IMR-90 (cell line): ENCODE measurements at regions of chr15 and their contacts with region 1.

Region 1: GRCh38 chr15:48440084-48440483 is 108.9 kb downstream of the DUT start:
- DNase-seq: peak; percentile 87
- ATAC-seq: peak; percentile 92
- H3K4me3 ChIP-seq: no peak overlapping the region
- H3K27ac ChIP-seq: peak overlapping the region; percentile 72; the same call in 1 of the 2 replicates
- H3K4me1 ChIP-seq: peaks cover 5% of the 10 kb centered on the region
- H3K27me3 ChIP-seq: no peaks in the 10 kb centered on the region
- CTCF ChIP-seq: no peak
- POLR2A ChIP-seq: no peak
- RAD21 ChIP-seq: no peak

Region 2: DNA sequence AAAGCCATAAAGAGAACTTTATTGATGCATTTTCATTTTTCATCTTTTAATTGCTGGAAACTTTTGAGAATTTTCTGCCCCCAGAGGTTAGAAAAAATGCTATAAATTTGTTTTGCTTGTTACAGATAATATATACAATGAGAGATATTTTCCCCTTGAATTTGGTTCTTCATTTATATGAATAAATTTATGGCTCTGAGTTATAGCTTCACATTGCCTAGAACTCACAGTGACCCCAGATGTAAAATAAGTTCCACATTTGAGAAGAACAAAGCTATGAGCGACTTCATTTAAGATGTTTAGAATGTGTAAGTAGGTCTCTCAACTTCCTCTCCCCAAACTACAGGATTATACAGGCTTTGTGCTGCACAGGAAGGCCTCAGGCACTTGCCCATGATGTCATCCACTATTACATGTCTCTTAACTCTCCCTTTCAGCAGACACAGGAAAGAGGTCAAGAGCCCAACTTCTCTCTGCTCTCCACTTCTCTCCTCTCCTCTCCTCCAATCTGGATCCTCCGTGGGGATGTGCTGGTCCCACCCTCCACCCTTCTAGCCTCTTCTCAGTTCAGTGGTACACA is 16.1 kb before region 1 on chr15:
- CTCF ChIA-PET with region 1: interaction called, 11 read pairs
- POLR2A ChIA-PET with region 1: no interaction called
- dilution Hi-C with region 1: no loop called
- in situ Hi-C with region 1: no loop called
- intact Hi-C with region 1: no loop called
- DNase-seq: peak; percentile 72
- ATAC-seq: peak; percentile 53
- H3K4me3 ChIP-seq: no peak overlapping the region
- H3K27ac ChIP-seq: peak overlapping the region; percentile 1; the same call in 1 of the 2 replicates
- H3K4me1 ChIP-seq: peaks cover 15% of the 10 kb centered on the region
- H3K27me3 ChIP-seq: no peaks in the 10 kb centered on the region
- CTCF ChIP-seq: no peak
- POLR2A ChIP-seq: no peak
- RAD21 ChIP-seq: no peak

Region 3: DNA sequence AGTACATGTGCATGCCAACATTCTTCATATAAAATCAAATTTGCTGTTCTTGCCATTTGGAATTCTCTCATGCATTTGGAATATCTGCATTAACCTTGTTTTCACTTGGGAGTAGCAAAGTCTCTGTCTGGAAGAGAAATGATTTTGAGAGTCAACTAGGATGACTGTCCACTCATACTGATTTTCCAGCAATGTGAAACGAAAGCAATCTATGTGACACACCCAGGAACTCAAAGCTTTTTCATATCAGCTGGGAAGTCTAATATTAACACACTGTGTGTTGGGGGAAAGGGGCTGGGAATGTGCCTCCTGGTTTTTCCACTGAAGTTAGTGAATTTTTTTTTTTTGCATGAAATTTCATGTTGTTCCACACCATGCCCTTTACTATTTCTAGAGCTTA is 16.1 kb after region 1 on chr15:
- CTCF ChIA-PET with region 1: interaction called, 11 read pairs
- POLR2A ChIA-PET with region 1: interaction called, 4 read pairs
- dilution Hi-C with region 1: no loop called
- in situ Hi-C with region 1: no loop called
- intact Hi-C with region 1: no loop called
- DNase-seq: no peak
- ATAC-seq: no peak
- H3K4me3 ChIP-seq: no peak overlapping the region
- H3K27ac ChIP-seq: no peak overlapping the region
- H3K4me1 ChIP-seq: peaks cover 9% of the 10 kb centered on the region
- H3K27me3 ChIP-seq: no peaks in the 10 kb centered on the region
- CTCF ChIP-seq: no peak
- POLR2A ChIP-seq: no peak
- RAD21 ChIP-seq: no peak